ENCODE measurements at regions of chr6 and their contacts with region 1.

Region 1: DNA sequence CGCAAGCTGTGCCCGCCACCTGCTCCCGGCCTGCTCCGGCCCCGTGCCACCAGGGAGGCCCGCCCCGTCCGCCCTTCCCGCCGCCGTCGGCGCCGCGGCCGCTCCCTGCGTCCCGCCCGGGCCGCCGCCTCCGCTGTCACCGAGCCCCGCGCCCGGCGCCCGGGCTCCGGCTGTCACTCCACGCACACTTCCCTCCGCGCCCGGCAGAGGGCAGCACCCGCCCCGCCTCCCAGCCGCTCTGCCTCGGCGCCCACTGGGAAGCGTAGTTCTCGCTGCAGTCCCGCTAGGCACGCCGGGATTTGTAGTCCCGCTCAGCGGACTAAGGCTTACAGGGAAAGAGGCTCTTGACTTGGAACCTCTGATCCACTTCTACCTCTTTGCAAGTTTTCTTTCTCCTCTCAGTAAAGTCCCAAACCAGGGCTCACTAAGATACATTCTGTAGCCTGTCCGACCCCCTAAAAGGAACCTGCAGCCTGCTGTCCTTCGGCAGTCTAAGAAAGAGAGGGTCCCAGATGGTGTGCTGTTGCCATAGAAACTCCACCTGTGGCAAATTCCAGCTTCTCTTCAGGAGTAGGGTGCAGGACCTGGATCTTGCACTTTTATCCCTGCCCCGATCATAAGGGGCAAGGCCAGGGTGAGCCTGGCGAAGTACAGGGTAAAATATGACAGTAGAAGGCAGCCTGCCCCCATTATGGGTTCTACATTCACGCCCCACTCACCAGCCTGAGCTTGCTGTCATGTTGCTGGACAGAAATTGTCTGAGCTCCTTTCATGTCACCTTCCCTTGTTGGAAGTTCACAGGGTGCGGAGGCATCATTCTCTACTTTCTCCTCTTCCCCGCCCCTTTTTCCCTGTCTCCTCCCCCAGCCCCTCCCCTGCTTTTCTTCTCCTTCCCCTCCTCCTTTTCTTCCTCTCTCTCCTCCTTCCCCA is at the start of gene TFEB:
- DNase-seq: peak; percentile 94
- ATAC-seq: peak; percentile 51
- H3K4me3 ChIP-seq: peak within 1 kb of the TSS in 4 of 5 experiments; percentile 68 to 89 (median 80)
- H3K4me3 Mint-ChIP-seq: peak within 1 kb of the TSS; percentile 93
- H3K27ac ChIP-seq: peak within 1 kb of the TSS; percentile 81 to 89
- H3K27ac Mint-ChIP-seq: peak within 1 kb of the TSS; percentile 95
- H3K4me1 ChIP-seq: peaks cover 23 to 36% of the 10 kb centered on the region in 2 donors
- H3K4me1 Mint-ChIP-seq: peaks cover 32% of the 10 kb centered on the region
- H3K27me3 ChIP-seq: no peaks in the 10 kb centered on the region
- H3K27me3 Mint-ChIP-seq: no peaks in the 10 kb centered on the region
- CTCF ChIP-seq: peak; percentile 80
- total RNA-seq, gene TFEB: 147 and 148 TPM in 2 replicates

Region 2: DNA sequence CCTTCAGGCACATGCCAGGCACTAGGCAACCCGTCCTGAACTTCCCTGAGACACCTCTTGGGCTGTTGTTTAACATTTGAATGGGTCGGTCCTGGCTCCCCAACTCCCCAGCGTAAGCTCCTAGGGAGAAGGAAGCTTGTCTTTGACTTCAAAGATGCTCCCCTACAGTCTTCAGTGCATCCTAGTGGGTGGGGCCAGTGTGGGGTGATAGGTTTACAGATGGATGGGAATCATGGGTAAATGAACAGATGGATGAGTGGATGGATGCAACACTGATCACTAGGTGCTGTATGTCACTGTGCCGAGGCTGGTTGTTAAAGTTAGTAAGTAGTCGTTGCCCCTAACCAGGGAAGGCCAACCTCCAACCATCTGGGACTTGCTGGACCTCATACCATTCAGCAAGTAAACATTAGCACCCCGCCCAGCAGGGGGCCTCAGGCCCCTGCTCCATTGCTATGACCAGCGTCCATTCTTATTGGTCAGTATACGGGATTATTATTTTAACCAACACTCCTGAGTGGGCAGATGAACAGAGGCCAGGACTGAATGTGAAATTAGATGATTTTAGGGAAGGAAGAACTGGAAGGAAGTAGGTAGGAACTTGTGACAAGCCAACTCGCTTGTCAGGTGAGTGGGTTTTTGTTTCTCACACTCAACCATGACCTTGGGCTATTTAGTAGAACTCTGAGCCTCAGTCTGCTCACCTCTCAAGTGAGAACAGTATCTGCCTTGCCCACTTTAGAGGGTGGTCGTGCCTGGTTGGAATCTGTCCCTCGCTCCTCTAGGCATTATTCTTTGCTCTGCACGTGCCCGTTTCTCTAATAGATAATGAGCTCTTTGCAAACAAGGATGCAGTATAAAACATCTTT is 272.4 kb before region 1 on chr6:
- CTCF ChIA-PET with region 1: no interaction called
- POLR2A ChIA-PET with region 1: no interaction called
- intact Hi-C with region 1: no loop called
- DNase-seq: peak; percentile 65
- ATAC-seq: peak; percentile 68
- H3K4me3 ChIP-seq: no peak overlapping the region
- H3K4me3 Mint-ChIP-seq: no peak overlapping the region
- H3K27ac ChIP-seq: no peak overlapping the region
- H3K27ac Mint-ChIP-seq: no peak overlapping the region
- H3K4me1 ChIP-seq: peaks cover 8 to 10% of the 10 kb centered on the region in 2 donors
- H3K4me1 Mint-ChIP-seq: peaks cover 11% of the 10 kb centered on the region
- H3K27me3 ChIP-seq: peaks cover 0 to 21% (median 1%) of the 10 kb centered on the region in 4 experiments
- H3K27me3 Mint-ChIP-seq: peaks cover 38% of the 10 kb centered on the region
- CTCF ChIP-seq: peak; percentile 72

Region 3: GRCh38 chr6:41602864-41603608 is 132.7 kb before region 1 on chr6:
- CTCF ChIA-PET with region 1: interaction called, 4 read pairs
- POLR2A ChIA-PET with region 1: no interaction called
- intact Hi-C with region 1: loop called (anchors 1 kb)
- DNase-seq: peak; percentile 85
- ATAC-seq: peak; percentile 90
- H3K4me3 ChIP-seq: peak overlapping the region in 1 of 5 experiments; percentile 11
- H3K4me3 Mint-ChIP-seq: peak overlapping the region; percentile 41
- H3K27ac ChIP-seq: no peak overlapping the region
- H3K27ac Mint-ChIP-seq: no peak overlapping the region
- H3K4me1 ChIP-seq: peaks cover 4 to 13% of the 10 kb centered on the region in 2 donors
- H3K4me1 Mint-ChIP-seq: peaks cover 10% of the 10 kb centered on the region
- H3K27me3 ChIP-seq: peaks cover 0 to 3% (median 0%) of the 10 kb centered on the region in 4 experiments
- H3K27me3 Mint-ChIP-seq: peaks cover 11% of the 10 kb centered on the region
- CTCF ChIP-seq: peak; percentile 82

Region 4: DNA sequence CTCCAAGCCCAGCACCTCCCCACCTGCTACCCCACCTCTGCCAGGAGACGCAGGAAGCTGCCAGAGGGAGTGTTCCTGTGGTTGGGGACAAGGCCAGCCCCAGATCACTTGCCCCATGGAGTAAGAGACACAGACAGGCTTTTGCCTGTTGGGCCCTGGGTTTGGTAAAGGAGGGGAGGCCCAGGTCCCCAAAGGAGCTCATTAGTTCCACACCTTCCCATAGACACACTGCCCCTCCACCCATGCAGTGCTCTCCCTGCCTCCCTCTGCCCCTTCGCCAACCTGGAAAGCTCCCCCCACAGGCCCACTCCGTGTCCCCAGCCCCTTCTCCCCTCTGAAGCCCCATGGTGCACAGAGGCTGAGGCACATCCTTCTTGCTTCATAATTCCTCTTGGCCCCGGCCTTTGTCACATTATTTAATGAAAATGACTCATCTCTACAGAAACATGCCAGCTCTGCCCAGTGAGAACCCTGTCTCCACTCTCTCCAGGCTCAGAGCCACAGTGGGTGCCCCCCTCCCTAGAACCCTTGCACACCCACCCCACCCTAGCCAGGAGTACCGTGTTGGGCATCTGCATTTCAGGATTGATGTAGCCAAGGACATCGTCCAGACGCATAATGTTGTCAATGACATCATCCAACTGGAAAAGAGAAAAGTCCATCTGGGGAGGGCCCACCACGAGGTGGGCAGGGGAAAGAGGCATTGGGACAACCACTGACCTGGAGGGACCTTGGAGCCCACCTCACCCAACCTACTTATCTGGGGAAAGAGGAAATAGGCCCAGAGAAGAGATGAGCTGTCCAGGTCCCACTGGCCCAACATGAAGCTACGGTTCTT is 46.3 kb before region 1 on chr6:
- CTCF ChIA-PET with region 1: interaction called, 50 read pairs
- POLR2A ChIA-PET with region 1: interaction called, 24 read pairs
- intact Hi-C with region 1: no loop called
- DNase-seq: no peak
- ATAC-seq: no peak
- H3K4me3 ChIP-seq: no peak overlapping the region
- H3K4me3 Mint-ChIP-seq: no peak overlapping the region
- H3K27ac ChIP-seq: peak overlapping the region in 1 of 2 donors; percentile 47
- H3K27ac Mint-ChIP-seq: peak overlapping the region; percentile 68
- H3K4me1 ChIP-seq: peaks cover 11 to 21% of the 10 kb centered on the region in 2 donors
- H3K4me1 Mint-ChIP-seq: peaks cover 23% of the 10 kb centered on the region
- H3K27me3 ChIP-seq: no peaks in the 10 kb centered on the region
- H3K27me3 Mint-ChIP-seq: no peaks in the 10 kb centered on the region
- CTCF ChIP-seq: no peak

Region 5: GRCh38 chr6:41705996-41706835 is 29.5 kb before region 1 on chr6:
- CTCF ChIA-PET with region 1: interaction called, 303 read pairs
- POLR2A ChIA-PET with region 1: interaction called, 342 read pairs
- intact Hi-C with region 1: loop called (anchors 1 kb)
- DNase-seq: peak; percentile 94
- ATAC-seq: peak; percentile 81
- H3K4me3 ChIP-seq: peak overlapping the region in 4 of 5 experiments; percentile 33 to 65 (median 56)
- H3K4me3 Mint-ChIP-seq: peak overlapping the region; percentile 86
- H3K27ac ChIP-seq: peak overlapping the region; percentile 83 to 96
- H3K27ac Mint-ChIP-seq: peak overlapping the region; percentile 100
- H3K4me1 ChIP-seq: peaks cover 84 to 87% of the 10 kb centered on the region in 2 donors
- H3K4me1 Mint-ChIP-seq: peaks cover 97% of the 10 kb centered on the region
- H3K27me3 ChIP-seq: no peaks in the 10 kb centered on the region
- H3K27me3 Mint-ChIP-seq: no peaks in the 10 kb centered on the region
- CTCF ChIP-seq: peak; percentile 89

Region 6: GRCh38 chr6:41723530-41724227 is 12.0 kb before region 1 on chr6:
- CTCF ChIA-PET with region 1: interaction called, 110 read pairs
- POLR2A ChIA-PET with region 1: interaction called, 109 read pairs
- intact Hi-C with region 1: loop called (anchors 1 kb)
- DNase-seq: peak; percentile 91
- ATAC-seq: peak; percentile 90
- H3K4me3 ChIP-seq: peak overlapping the region; percentile 48 to 73 (median 59)
- H3K4me3 Mint-ChIP-seq: peak overlapping the region; percentile 96
- H3K27ac ChIP-seq: peak overlapping the region; percentile 87 to 90
- H3K27ac Mint-ChIP-seq: peak overlapping the region; percentile 99
- H3K4me1 ChIP-seq: peaks cover 95 to 100% of the 10 kb centered on the region in 2 donors
- H3K4me1 Mint-ChIP-seq: peaks cover 95% of the 10 kb centered on the region
- H3K27me3 ChIP-seq: no peaks in the 10 kb centered on the region
- H3K27me3 Mint-ChIP-seq: no peaks in the 10 kb centered on the region
- CTCF ChIP-seq: no peak

Region 7: GRCh38 chr6:41901882-41902519 is 166.3 kb after region 1 on chr6:
- CTCF ChIA-PET with region 1: no interaction called
- POLR2A ChIA-PET with region 1: no interaction called
- intact Hi-C with region 1: no loop called
- DNase-seq: peak; percentile 47
- ATAC-seq: no peak
- H3K4me3 ChIP-seq: no peak overlapping the region
- H3K4me3 Mint-ChIP-seq: no peak overlapping the region
- H3K27ac ChIP-seq: no peak overlapping the region
- H3K27ac Mint-ChIP-seq: no peak overlapping the region
- H3K4me1 ChIP-seq: no peaks in the 10 kb centered on the region
- H3K4me1 Mint-ChIP-seq: no peaks in the 10 kb centered on the region
- H3K27me3 ChIP-seq: no peaks in the 10 kb centered on the region
- H3K27me3 Mint-ChIP-seq: no peaks in the 10 kb centered on the region
- CTCF ChIP-seq: peak; percentile 26

Region 8: DNA sequence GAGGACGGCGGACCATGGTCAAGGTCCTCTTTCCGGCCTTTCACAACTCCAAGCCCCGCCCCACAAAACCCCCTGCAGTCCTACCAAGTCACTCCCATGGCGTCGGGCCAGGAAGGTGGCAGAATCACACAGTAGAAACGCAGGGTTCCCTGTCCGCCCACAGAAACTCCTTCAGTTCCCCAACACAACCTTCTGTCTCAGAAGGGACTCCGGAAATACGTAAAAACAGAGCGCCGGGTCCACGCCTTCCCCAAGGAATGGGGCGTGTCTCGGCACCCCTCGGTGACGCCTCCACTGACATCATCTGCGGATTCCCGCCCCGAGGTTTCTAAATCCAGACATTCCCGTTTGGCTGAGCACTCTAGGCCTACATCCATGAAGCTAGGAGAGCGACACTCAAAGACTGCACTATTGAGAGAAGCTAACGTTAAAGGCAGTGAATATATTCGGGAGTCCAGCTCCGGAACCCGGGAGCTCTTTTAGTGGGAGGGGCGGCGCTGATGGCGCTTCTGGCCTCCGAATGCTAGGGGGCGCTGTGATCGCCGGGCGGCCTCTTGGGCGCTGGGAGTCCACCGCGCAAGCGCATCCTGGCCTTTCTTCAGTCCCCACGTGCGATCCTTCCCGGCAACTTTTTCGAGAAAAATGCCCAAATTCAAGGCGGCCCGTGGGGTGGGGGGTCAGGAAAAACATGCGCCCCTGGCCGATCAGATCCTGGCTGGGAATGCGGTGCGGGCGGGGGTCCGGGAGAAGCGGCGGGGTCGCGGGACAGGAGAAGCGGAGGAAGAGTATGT is 185.4 kb after region 1 on chr6 and contains the starts of genes BYSL and MED20:
- CTCF ChIA-PET with region 1: interaction called, 6 read pairs
- POLR2A ChIA-PET with region 1: interaction called, 3 read pairs
- intact Hi-C with region 1: loop called (anchors 1 kb)
- DNase-seq: peak; percentile 98
- ATAC-seq: peak; percentile 93
- H3K4me3 ChIP-seq: peak within 1 kb of the TSS; percentile 67 to 99 (median 97)
- H3K4me3 Mint-ChIP-seq: peak within 1 kb of the TSS; percentile 98
- H3K27ac ChIP-seq: peak within 1 kb of the TSS; percentile 91 to 96
- H3K27ac Mint-ChIP-seq: peak within 1 kb of the TSS; percentile 98
- H3K4me1 ChIP-seq: peaks cover 26 to 29% of the 10 kb centered on the region in 2 donors
- H3K4me1 Mint-ChIP-seq: peaks cover 47% of the 10 kb centered on the region
- H3K27me3 ChIP-seq: no peaks in the 10 kb centered on the region
- H3K27me3 Mint-ChIP-seq: no peaks in the 10 kb centered on the region
- CTCF ChIP-seq: peak; percentile 93
- total RNA-seq, gene BYSL: 10.5 and 11.1 TPM in 2 replicates
- total RNA-seq, gene MED20: 18.2 and 24.2 TPM in 2 replicates

Region 9: DNA sequence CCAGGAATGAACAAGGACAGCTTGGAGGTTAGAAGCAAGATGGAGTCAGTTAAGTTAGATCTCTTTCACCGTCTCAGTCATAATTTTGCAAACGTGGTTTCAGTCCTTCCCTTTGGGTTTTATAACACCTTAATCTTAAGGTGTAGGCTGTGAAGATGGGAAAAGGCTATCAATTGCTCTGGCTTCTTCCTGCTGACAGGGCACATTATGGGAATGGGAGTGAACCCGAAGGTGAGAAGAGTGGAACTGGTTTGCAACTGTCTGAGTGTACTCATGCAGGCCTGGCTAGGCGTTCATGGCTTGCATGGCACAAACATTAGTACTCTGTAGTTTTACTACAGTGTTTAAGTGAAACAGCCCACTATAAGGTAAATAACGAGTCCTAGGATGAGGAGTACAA is 324.1 kb after region 1 on chr6:
- CTCF ChIA-PET with region 1: no interaction called
- POLR2A ChIA-PET with region 1: no interaction called
- intact Hi-C with region 1: no loop called
- DNase-seq: no peak
- ATAC-seq: no peak
- H3K4me3 ChIP-seq: no peak overlapping the region
- H3K4me3 Mint-ChIP-seq: no peak overlapping the region
- H3K27ac ChIP-seq: no peak overlapping the region
- H3K27ac Mint-ChIP-seq: no peak overlapping the region
- H3K4me1 ChIP-seq: no peaks in the 10 kb centered on the region
- H3K4me1 Mint-ChIP-seq: no peaks in the 10 kb centered on the region
- H3K27me3 ChIP-seq: no peaks in the 10 kb centered on the region
- H3K27me3 Mint-ChIP-seq: no peaks in the 10 kb centered on the region
- CTCF ChIP-seq: no peak